ENCODE measurements at regions of chr19 and their contacts with region 1.

Region 1: GRCh38 chr19:4638828-4639530 is at the start of gene TNFAIP8L1:
- DNase-seq: peak; percentile 95 to 98 (median 97)
- H3K4me3 ChIP-seq: peak within 1 kb of the TSS; percentile 43
- H3K27ac ChIP-seq: peak within 1 kb of the TSS; percentile 1 to 49
- H3K4me1 ChIP-seq: peaks cover 3% of the 10 kb centered on the region
- H3K27me3 ChIP-seq: no peaks in the 10 kb centered on the region
- CTCF ChIP-seq: peak in 1 of 3 donors; percentile 12
- EP300 ChIP-seq: no peak
- POLR2A ChIP-seq: no peak
- total RNA-seq, gene TNFAIP8L1: 4.3 to 14.0 (median 9.8) TPM

Region 2: GRCh38 chr19:4557971-4558941 is 80.7 kb before region 1 on chr19:
- intact Hi-C with region 1: loop called in 1 of 4 experiments (anchors 5 kb)
- DNase-seq: peak in 2 of 5 donors; percentile 66 to 67
- H3K4me3 ChIP-seq: no peak overlapping the region
- H3K27ac ChIP-seq: no peak overlapping the region
- H3K4me1 ChIP-seq: no peaks in the 10 kb centered on the region
- H3K27me3 ChIP-seq: no peaks in the 10 kb centered on the region
- CTCF ChIP-seq: peak; percentile 85 to 97 (median 90)
- EP300 ChIP-seq: no peak
- POLR2A ChIP-seq: no peak

Region 3: GRCh38 chr19:4606921-4607678 is 31.9 kb before region 1 on chr19:
- intact Hi-C with region 1: no loop called
- DNase-seq: peak in 3 of 5 donors; percentile 33 to 72 (median 39)
- H3K4me3 ChIP-seq: no peak overlapping the region
- H3K27ac ChIP-seq: no peak overlapping the region
- H3K4me1 ChIP-seq: peaks cover 3% of the 10 kb centered on the region
- H3K27me3 ChIP-seq: no peaks in the 10 kb centered on the region
- CTCF ChIP-seq: no peak
- EP300 ChIP-seq: no peak
- POLR2A ChIP-seq: no peak